ENCODE measurements at regions of chr17 and their contacts with region 1.

Region 1: GRCh38 chr17:78798695-78799559 is 16.9 kb upstream of the CYTH1 start:
- DNase-seq: no peak
- H3K4me3 Mint-ChIP-seq: no peak overlapping the region
- H3K27ac Mint-ChIP-seq: peak overlapping the region; percentile 37
- H3K4me1 Mint-ChIP-seq: peaks cover 62% of the 10 kb centered on the region
- H3K27me3 Mint-ChIP-seq: no peaks in the 10 kb centered on the region

Region 2: GRCh38 chr17:78497115-78497540 is 301.8 kb before region 1 on chr17:
- intact Hi-C with region 1: loop called (anchors 2 kb)
- DNase-seq: peak; percentile 30
- H3K4me3 Mint-ChIP-seq: no peak overlapping the region
- H3K27ac Mint-ChIP-seq: no peak overlapping the region
- H3K4me1 Mint-ChIP-seq: no peaks in the 10 kb centered on the region
- H3K27me3 Mint-ChIP-seq: peaks cover 2% of the 10 kb centered on the region

Region 3: DNA sequence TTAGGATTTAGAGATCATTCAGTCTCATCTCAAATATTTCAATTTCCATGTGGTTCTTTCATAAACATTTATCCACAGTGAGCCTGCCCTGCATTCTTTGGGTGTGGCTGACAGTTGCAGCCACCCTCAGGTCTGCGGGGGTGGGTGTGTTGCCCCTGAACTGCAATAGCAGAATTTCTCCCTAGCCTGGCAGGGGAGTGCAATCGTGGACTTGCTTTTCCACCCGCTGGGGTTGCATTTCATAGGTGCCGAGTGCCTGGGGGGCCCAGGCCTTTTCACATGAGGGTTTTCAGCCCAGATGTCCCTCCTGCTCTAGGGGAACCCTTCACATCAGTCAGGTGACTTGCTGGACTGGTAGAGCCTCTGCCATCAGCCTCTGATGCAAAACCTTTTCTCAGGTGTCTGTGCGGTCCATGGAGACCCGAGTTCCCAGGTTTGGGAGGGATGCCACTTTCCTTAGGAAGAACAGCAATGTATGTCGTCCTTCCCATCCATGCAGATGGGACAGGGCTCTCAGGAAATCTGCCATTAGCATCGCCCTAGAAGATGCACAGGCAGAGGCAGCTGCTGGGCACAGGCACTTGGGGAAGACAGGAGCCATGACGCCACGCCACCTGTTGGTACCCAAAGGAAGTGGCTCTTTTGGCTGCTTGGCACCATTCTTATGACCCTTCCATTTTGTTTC is 44.1 kb after region 1 on chr17:
- intact Hi-C with region 1: no loop called
- DNase-seq: peak; percentile 44
- H3K4me3 Mint-ChIP-seq: peak overlapping the region; percentile 37
- H3K27ac Mint-ChIP-seq: peak overlapping the region; percentile 40
- H3K4me1 Mint-ChIP-seq: peaks cover 34% of the 10 kb centered on the region
- H3K27me3 Mint-ChIP-seq: no peaks in the 10 kb centered on the region

Measured in activated T-helper 1 cell treated with anti-CD3 and anti-CD28 coated beads, Interleukin-12 subunit alpha, Interleukin-12 subunit beta, Interleukin-2, Interleukin-4 antibody, amounts not matched to agents 30 ng/mL and 10 ng/mL and 1 ng/mL, durations not matched to agents 14 hours and 24 hours and 36 hours (primary cell).